ENCODE measurements at regions of chr20 and their contacts with region 1.

Region 1: DNA sequence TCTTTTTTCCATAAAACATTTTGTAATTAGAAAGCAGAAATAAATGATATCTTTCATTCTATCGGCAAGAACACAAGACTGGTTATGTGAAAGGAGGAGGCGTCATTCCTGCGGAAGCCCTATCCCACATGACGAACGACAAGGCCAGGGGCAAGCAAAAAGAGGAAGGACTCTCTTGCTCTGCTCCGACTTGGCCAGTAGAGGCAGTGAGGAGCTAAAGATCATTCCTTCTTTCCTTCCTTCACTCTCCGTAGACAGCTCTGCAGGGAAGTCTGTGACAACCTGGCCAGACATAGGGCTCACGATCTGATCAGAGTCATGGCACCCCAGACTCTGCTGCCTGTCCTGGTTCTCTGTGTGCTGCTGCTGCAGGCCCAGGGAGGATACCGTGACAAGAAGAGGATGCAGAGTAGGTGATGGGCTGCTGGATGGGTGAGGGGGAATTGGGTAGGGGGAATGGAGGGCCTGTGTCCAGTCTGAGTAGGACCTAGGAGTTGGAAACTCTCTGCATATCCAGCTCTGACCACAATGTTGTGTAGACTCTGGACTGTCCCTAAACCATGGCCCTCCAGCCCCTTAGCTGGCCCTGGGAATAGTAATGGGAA is at the start of gene WFDC10A:
- DNase-seq: peak; percentile 75
- H3K4me3 Mint-ChIP-seq: no peak within 1 kb of the TSS
- H3K27ac Mint-ChIP-seq: no peak within 1 kb of the TSS
- H3K4me1 Mint-ChIP-seq: no peaks in the 10 kb centered on the region
- H3K27me3 Mint-ChIP-seq: peaks cover 55% of the 10 kb centered on the region
- CTCF ChIP-seq: peak; percentile 79
- total RNA-seq, gene WFDC10A: not detected in 2 replicates

Region 2: GRCh38 chr20:45450097-45450818 is 179.3 kb before region 1 on chr20:
- CTCF ChIA-PET with region 1: no interaction called
- intact Hi-C with region 1: loop called (anchors 10 kb)
- DNase-seq: peak; percentile 41
- H3K4me3 Mint-ChIP-seq: no peak overlapping the region
- H3K27ac Mint-ChIP-seq: no peak overlapping the region
- H3K4me1 Mint-ChIP-seq: peaks cover 33% of the 10 kb centered on the region
- H3K27me3 Mint-ChIP-seq: peaks cover 48% of the 10 kb centered on the region
- CTCF ChIP-seq: peak; percentile 88

Region 3: DNA sequence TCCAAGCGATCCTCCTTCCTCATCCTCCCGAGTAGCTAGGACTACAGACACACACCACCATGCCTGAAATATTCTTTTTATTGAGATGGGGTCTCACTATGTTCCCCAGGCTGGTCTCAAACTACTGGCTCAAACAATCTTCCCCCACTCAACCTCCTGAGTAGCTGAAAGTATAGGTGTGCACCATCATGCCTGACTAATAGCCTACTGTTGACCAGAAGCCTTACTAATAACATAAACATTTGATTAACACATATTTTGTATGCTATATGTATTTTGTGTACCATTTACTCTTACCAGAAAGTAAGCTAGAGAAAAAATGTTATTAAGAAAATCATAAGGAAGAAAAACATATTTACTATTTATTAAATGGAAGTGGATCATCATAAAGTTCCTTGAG is 12.0 kb before region 1 on chr20:
- CTCF ChIA-PET with region 1: interaction called, 13 read pairs
- intact Hi-C with region 1: no loop called
- DNase-seq: no peak
- H3K4me3 Mint-ChIP-seq: no peak overlapping the region
- H3K27ac Mint-ChIP-seq: no peak overlapping the region
- H3K4me1 Mint-ChIP-seq: peaks cover 11% of the 10 kb centered on the region
- H3K27me3 Mint-ChIP-seq: peaks cover 45% of the 10 kb centered on the region
- CTCF ChIP-seq: no peak